ENCODE measurements at regions of chr6 and their contacts with region 1.

Region 1: GRCh38 chr6:118317581-118318563 is 230.2 kb upstream of the PLN start:
- DNase-seq: no peak
- ATAC-seq: no peak
- H3K4me3 ChIP-seq: no peak overlapping the region
- H3K27ac ChIP-seq: no peak overlapping the region
- H3K4me1 ChIP-seq: no peaks in the 10 kb centered on the region
- H3K27me3 ChIP-seq: peaks cover 0 to 14% of the 10 kb centered on the region in 2 experiments; a peak in 3 of 5 replicates
- CTCF ChIP-seq: no peak
- EP300 ChIP-seq: no peak
- POLR2A ChIP-seq: no peak
- RAD21 ChIP-seq: no peak

Region 2: GRCh38 chr6:118295336-118295735 is 22.5 kb before region 1 on chr6:
- CTCF ChIA-PET with region 1: no interaction called
- POLR2A ChIA-PET with region 1: no interaction called
- in situ Hi-C with region 1: no loop called
- intact Hi-C with region 1: loop called (anchors 2 kb)
- DNase-seq: no peak
- ATAC-seq: no peak
- H3K4me3 ChIP-seq: no peak overlapping the region
- H3K27ac ChIP-seq: no peak overlapping the region
- H3K4me1 ChIP-seq: no peaks in the 10 kb centered on the region
- H3K27me3 ChIP-seq: no peaks in the 10 kb centered on the region
- CTCF ChIP-seq: no peak
- EP300 ChIP-seq: no peak
- POLR2A ChIP-seq: no peak
- RAD21 ChIP-seq: no peak

Region 3: GRCh38 chr6:118468682-118469465 is 151.0 kb after region 1 on chr6:
- CTCF ChIA-PET with region 1: no interaction called
- POLR2A ChIA-PET with region 1: no interaction called
- in situ Hi-C with region 1: no loop called
- intact Hi-C with region 1: no loop called
- DNase-seq: no peak
- ATAC-seq: no peak
- H3K4me3 ChIP-seq: no peak overlapping the region
- H3K27ac ChIP-seq: no peak overlapping the region
- H3K4me1 ChIP-seq: no peaks in the 10 kb centered on the region
- H3K27me3 ChIP-seq: no peaks in the 10 kb centered on the region
- CTCF ChIP-seq: no peak
- EP300 ChIP-seq: no peak
- POLR2A ChIP-seq: no peak
- RAD21 ChIP-seq: no peak